Ovary (tissue), 10 donors: ENCODE measurements at regions of chr19 and their contacts with region 1.

Region 1: DNA sequence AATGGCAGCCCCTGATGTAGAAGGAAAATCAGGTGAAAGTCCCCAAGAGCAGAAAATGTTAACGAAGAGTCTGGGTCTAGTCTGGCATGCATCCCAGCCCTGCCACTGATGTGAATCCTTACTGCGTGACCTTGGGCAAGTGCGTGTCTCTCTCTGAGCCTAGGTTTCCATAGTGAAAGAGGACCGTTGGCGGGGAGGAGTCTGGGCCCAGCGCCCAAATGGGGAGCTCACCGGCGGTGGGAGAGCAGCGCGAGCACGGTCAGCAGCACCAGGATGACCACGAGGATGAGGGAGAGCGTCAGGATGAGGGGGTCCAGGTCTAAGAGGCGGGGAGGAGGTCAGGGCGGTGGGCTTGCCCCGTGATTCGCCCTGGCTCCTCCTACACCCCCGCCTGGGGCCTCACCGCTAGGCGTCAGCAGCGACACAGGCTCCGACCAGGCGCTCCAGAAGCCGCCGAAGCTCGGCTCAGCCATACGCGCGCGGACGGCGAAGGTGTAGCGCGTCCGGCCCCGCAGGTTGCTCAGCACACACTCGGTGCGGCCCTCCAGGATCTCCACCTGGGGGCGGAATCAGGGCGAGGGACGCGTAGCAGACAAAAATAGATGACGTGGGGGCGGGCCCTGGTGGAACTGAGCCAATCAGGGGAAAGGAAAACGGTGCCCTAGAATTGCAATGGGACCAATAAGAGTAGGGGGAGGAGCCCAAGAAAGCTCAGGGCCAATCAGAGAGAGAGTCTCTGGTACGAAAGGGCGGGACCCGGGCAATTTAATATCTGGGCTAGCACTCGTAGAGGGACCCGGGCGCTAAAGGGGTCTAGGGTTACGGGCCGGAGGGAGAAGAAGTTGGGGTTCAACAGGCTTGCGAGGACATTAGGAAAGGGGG is 3.2 kb downstream of the EPOR start:
- DNase-seq: peak; percentile 94 to 97 (median 96)
- H3K4me3 ChIP-seq: peak overlapping the region; percentile 83
- H3K27ac ChIP-seq: peak overlapping the region; percentile 55 to 63
- H3K4me1 ChIP-seq: peaks cover 15% of the 10 kb centered on the region
- H3K27me3 ChIP-seq: no peaks in the 10 kb centered on the region
- CTCF ChIP-seq: peak; percentile 66 to 95 (median 92)
- EP300 ChIP-seq: no peak
- POLR2A ChIP-seq: peak; percentile 80

Region 2: DNA sequence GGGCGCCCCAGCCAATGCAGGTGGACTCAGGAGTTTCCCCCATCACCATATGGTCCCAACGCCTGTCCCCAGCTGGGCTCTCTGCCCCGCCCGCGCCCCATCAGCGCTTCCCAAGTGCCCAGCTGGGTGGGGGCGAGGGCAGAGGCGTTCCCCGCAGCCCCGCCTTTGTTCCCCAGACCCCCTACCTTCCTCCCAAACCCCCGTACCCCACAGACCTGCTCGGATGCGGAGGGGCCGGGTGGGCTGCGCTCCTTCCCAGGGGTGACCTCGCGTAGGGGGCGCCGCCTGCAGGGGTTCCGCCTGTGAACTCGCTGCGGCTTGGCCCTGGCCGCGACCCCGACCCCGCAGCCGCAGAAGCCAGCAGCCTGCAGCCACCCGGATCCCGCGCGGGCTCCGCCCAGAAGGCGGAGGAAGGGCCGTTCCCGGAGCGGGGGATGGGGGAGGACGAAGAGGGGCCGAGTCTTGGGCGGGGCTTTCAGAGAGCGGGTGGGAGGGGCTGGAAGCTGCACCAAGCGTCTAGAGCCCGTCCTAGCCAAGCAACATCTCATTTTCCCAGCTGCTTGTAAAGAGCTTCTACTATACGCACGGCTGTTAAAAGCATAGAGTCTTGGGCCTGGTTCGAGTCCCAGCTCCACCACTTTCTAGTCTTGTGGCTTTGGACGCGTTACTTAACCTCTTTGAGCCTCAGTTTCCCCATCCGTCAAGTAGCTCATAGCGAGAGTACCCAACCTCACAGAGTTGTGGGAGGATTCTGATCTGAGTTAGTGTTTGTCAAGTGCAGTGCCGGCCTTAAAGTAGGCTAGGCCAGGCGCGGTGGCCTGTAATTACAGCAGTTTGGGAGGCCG is 41.4 kb before region 1 on chr19 and contains the start of gene RAB3D:
- intact Hi-C with region 1: loop called in 1 of 4 experiments (anchors 1 kb)
- DNase-seq: peak; percentile 92 to 95 (median 94)
- H3K4me3 ChIP-seq: peak within 1 kb of the TSS; percentile 95
- H3K27ac ChIP-seq: peak within 1 kb of the TSS; percentile 78 to 80
- H3K4me1 ChIP-seq: peaks cover 8% of the 10 kb centered on the region
- H3K27me3 ChIP-seq: no peaks in the 10 kb centered on the region
- CTCF ChIP-seq: no peak
- EP300 ChIP-seq: no peak
- POLR2A ChIP-seq: no peak
- total RNA-seq, gene RAB3D: 6.8 to 27.2 (median 17.3) TPM

Region 3: GRCh38 chr19:11434736-11435057 is 53.8 kb after region 1 on chr19:
- intact Hi-C with region 1: loop called in 1 of 4 experiments (anchors 5 kb)
- DNase-seq: no peak
- H3K4me3 ChIP-seq: peak overlapping the region; percentile 88
- H3K27ac ChIP-seq: peak overlapping the region in 1 of 2 donors; percentile 71
- H3K4me1 ChIP-seq: peaks cover 12% of the 10 kb centered on the region
- H3K27me3 ChIP-seq: no peaks in the 10 kb centered on the region
- CTCF ChIP-seq: no peak
- EP300 ChIP-seq: no peak
- POLR2A ChIP-seq: peak; percentile 7

Region 4: GRCh38 chr19:11453468-11454341 is 72.8 kb after region 1 on chr19:
- intact Hi-C with region 1: no loop called
- DNase-seq: no peak
- H3K4me3 ChIP-seq: no peak overlapping the region
- H3K27ac ChIP-seq: no peak overlapping the region
- H3K4me1 ChIP-seq: peaks cover 1% of the 10 kb centered on the region
- H3K27me3 ChIP-seq: no peaks in the 10 kb centered on the region
- CTCF ChIP-seq: no peak
- EP300 ChIP-seq: no peak
- POLR2A ChIP-seq: no peak

Region 5: DNA sequence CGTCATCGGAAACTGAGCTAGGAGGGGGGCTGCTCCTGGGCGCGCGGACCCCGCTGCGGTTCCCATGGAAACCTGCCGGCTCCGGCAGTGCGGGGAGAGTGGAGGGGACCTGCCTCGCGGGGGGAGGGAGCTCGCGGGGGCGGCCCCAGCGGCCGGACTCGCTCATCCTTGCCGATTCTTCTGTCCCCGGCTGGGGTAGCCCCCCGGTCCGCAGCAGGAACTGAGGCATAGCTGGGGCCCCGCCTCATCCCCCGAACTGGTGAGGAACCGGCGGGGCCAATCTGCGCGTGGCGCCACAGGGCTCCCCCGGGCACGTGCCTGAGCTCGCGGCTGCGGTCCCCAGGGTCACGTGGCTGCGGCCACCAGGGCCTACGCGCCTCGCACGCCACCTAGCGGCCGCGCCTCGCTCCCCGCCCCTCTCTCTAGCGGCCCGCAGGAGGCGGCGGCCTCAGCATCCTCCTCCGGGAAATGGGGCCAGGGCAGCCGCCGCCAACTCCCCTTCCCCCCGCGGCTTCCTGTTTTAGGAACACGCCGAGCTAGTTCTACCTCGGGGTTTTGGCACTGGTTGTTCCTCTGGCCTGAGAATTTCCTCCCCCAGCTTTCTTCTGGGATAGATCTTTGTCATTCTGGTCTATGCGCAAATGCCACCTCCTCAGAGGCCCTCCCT is 101.6 kb after region 1 on chr19:
- intact Hi-C with region 1: loop called in 1 of 4 experiments (anchors 10 kb)
- DNase-seq: peak; percentile 67 to 85 (median 75)
- H3K4me3 ChIP-seq: no peak overlapping the region
- H3K27ac ChIP-seq: no peak overlapping the region
- H3K4me1 ChIP-seq: peaks cover 11% of the 10 kb centered on the region
- H3K27me3 ChIP-seq: peaks cover 11% of the 10 kb centered on the region
- CTCF ChIP-seq: peak; percentile 81 to 97 (median 94)
- EP300 ChIP-seq: no peak
- POLR2A ChIP-seq: no peak

Region 6: GRCh38 chr19:11624069-11624463 is 243.2 kb after region 1 on chr19:
- intact Hi-C with region 1: no loop called
- DNase-seq: no peak
- H3K4me3 ChIP-seq: peak overlapping the region; percentile 38
- H3K27ac ChIP-seq: no peak overlapping the region
- H3K4me1 ChIP-seq: peaks cover 1% of the 10 kb centered on the region
- H3K27me3 ChIP-seq: no peaks in the 10 kb centered on the region
- CTCF ChIP-seq: no peak
- EP300 ChIP-seq: no peak
- POLR2A ChIP-seq: no peak